ENCODE measurements at regions of chr3 and their contacts with region 1.

Region 1: GRCh38 chr3:188772886-188773285 is 398.9 kb upstream of the TPRG1 start:
- DNase-seq: no peak
- ATAC-seq: no peak
- H3K4me3 ChIP-seq: no peak overlapping the region
- H3K4me3 Mint-ChIP-seq: no peak overlapping the region
- H3K27ac ChIP-seq: no peak overlapping the region
- H3K27ac Mint-ChIP-seq: no peak overlapping the region
- H3K4me1 ChIP-seq: no peaks in the 10 kb centered on the region
- H3K4me1 Mint-ChIP-seq: no peaks in the 10 kb centered on the region
- H3K27me3 ChIP-seq: no peaks in the 10 kb centered on the region
- H3K27me3 Mint-ChIP-seq: no peaks in the 10 kb centered on the region

Region 2: DNA sequence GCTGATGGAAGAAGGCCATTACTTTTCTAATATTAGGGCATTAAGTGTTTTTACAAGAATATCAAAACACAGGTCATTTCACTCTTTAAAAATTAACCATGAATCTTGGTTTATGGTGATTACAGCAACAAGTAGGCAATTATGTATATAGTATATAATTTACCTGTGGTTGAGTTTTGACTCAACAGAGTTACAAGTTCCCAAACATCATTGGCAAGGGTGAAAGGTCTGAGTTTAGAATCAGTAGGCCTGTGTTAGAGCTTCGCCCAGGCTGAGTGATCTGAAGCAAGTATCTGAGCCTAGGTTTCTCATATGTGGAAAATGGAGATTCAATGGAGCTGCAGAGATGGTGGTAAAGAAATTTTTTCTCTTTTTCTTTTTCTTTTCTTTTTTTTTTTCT is 644.0 kb before region 1 on chr3:
- CTCF ChIA-PET with region 1: no interaction called
- POLR2A ChIA-PET with region 1: interaction called in 1 of 2 experiments, 10 read pairs
- DNase-seq: no peak
- ATAC-seq: no peak
- H3K4me3 ChIP-seq: no peak overlapping the region
- H3K4me3 Mint-ChIP-seq: no peak overlapping the region
- H3K27ac ChIP-seq: no peak overlapping the region
- H3K27ac Mint-ChIP-seq: no peak overlapping the region
- H3K4me1 ChIP-seq: no peaks in the 10 kb centered on the region
- H3K4me1 Mint-ChIP-seq: no peaks in the 10 kb centered on the region
- H3K27me3 ChIP-seq: no peaks in the 10 kb centered on the region
- H3K27me3 Mint-ChIP-seq: no peaks in the 10 kb centered on the region

Region 3: GRCh38 chr3:188472331-188472730 is 300.6 kb before region 1 on chr3:
- CTCF ChIA-PET with region 1: no interaction called
- POLR2A ChIA-PET with region 1: no interaction called
- DNase-seq: no peak
- ATAC-seq: no peak
- H3K4me3 ChIP-seq: no peak overlapping the region
- H3K4me3 Mint-ChIP-seq: no peak overlapping the region
- H3K27ac ChIP-seq: no peak overlapping the region
- H3K27ac Mint-ChIP-seq: no peak overlapping the region
- H3K4me1 ChIP-seq: no peaks in the 10 kb centered on the region
- H3K4me1 Mint-ChIP-seq: peaks cover 0 to 18% (median 8%) of the 10 kb centered on the region in 3 donors
- H3K27me3 ChIP-seq: no peaks in the 10 kb centered on the region
- H3K27me3 Mint-ChIP-seq: no peaks in the 10 kb centered on the region

Region 4: GRCh38 chr3:188701485-188701969 is 71.4 kb before region 1 on chr3:
- CTCF ChIA-PET with region 1: no interaction called
- POLR2A ChIA-PET with region 1: no interaction called
- DNase-seq: peak in 1 of 35 experiments; percentile 5
- ATAC-seq: no peak
- H3K4me3 ChIP-seq: no peak overlapping the region
- H3K4me3 Mint-ChIP-seq: no peak overlapping the region
- H3K27ac ChIP-seq: no peak overlapping the region
- H3K27ac Mint-ChIP-seq: no peak overlapping the region
- H3K4me1 ChIP-seq: no peaks in the 10 kb centered on the region
- H3K4me1 Mint-ChIP-seq: peaks cover 0 to 12% (median 7%) of the 10 kb centered on the region in 3 donors
- H3K27me3 ChIP-seq: no peaks in the 10 kb centered on the region
- H3K27me3 Mint-ChIP-seq: no peaks in the 10 kb centered on the region

Measured in T-cell (primary cell).